CD14-positive monocyte (primary cell): ENCODE measurements at regions of chr12 and their contacts with region 1.

Region 1: GRCh38 chr12:8609061-8609570 is 3.5 kb downstream of the AICDA start:
- DNase-seq: peak; percentile 32 to 46 (median 43)
- H3K4me3 ChIP-seq: peak overlapping the region; percentile 10 to 72 (median 28)
- H3K4me3 Mint-ChIP-seq: peak overlapping the region; percentile 77 to 80
- H3K27ac ChIP-seq: peak overlapping the region in 1 of 2 donors; percentile 78
- H3K27ac Mint-ChIP-seq: peak overlapping the region; percentile 71 to 92 (median 89)
- H3K4me1 ChIP-seq: peaks cover 19 to 32% of the 10 kb centered on the region in 2 donors
- H3K4me1 Mint-ChIP-seq: peaks cover 39% of the 10 kb centered on the region
- H3K27me3 ChIP-seq: no peaks in the 10 kb centered on the region
- H3K27me3 Mint-ChIP-seq: peaks cover 1 to 8% (median 3%) of the 10 kb centered on the region in 3 donors
- CTCF ChIP-seq: peak; percentile 84

Region 2: GRCh38 chr12:8544295-8544694 is 64.8 kb before region 1 on chr12:
- intact Hi-C with region 1: loop called in 1 of 2 experiments (anchors 10 kb)
- DNase-seq: peak; percentile 67 to 83 (median 76)
- H3K4me3 ChIP-seq: no peak overlapping the region
- H3K4me3 Mint-ChIP-seq: peak overlapping the region in 1 of 2 donors; percentile 26
- H3K27ac ChIP-seq: no peak overlapping the region
- H3K27ac Mint-ChIP-seq: peak overlapping the region in 2 of 7 donors; percentile 40 to 56
- H3K4me1 ChIP-seq: peaks cover 36 to 46% of the 10 kb centered on the region in 2 donors
- H3K4me1 Mint-ChIP-seq: peaks cover 52% of the 10 kb centered on the region
- H3K27me3 ChIP-seq: no peaks in the 10 kb centered on the region
- H3K27me3 Mint-ChIP-seq: peaks cover 0 to 2% (median 1%) of the 10 kb centered on the region in 3 donors
- CTCF ChIP-seq: peak; percentile 97

Region 3: GRCh38 chr12:8554451-8555195 is 54.5 kb before region 1 on chr12:
- intact Hi-C with region 1: loop called (anchors 5 to 10 kb)
- DNase-seq: peak in 1 of 3 donors; percentile 58
- H3K4me3 ChIP-seq: no peak overlapping the region
- H3K4me3 Mint-ChIP-seq: no peak overlapping the region
- H3K27ac ChIP-seq: no peak overlapping the region
- H3K27ac Mint-ChIP-seq: peak overlapping the region in 1 of 7 donors; percentile 56
- H3K4me1 ChIP-seq: peaks cover 0 to 6% of the 10 kb centered on the region in 2 donors
- H3K4me1 Mint-ChIP-seq: peaks cover 4% of the 10 kb centered on the region
- H3K27me3 ChIP-seq: no peaks in the 10 kb centered on the region
- H3K27me3 Mint-ChIP-seq: peaks cover 1 to 6% (median 3%) of the 10 kb centered on the region in 3 donors
- CTCF ChIP-seq: no peak